Activated naive CD4-positive, alpha-beta T cell treated with anti-CD3 and anti-CD28 coated beads, Interleukin-2, amount 10 ng/mL, durations not matched to agents 7 days and 5 days (primary cell): ENCODE measurements at regions of chr22 and their contacts with region 1.

Region 1: DNA sequence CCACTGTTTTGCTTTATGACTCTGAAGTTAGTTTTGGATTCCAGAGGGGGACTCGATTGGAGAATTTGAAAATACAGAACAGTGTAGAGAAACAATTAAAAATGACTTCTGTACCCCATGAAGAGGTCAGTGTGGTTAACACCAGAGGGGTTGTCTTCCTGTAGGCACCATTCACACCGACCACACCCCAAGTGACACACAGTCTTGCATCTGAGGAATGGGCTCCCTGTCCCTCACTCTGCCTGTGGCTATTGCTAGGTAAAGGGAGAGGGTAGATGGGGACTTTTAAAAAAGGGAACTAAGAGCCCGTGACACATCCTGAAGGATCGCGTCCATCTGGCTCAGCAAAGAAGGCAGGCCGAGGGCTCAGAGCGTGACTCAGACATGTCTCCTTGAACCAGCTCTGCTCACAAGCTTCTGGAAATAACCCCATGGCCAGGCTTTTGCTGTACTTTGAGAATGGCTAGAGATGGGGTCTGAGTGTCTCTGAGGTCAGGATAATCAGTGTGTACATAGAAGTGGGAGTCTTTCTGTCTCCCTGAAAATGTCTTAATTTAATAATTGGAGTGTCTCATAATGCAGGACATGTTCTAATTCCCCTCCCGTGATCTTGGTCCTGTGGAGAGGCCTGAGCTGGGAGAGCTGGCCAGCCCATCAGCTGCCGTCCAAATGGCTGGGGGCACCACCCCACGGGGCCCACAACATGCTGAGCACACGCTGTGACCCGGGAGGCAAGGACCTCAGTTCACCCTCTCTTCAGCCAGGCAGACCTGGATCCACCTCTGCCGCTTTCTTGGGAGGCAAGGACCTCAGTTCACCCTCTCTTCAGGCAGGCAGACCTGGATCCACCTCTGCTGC is 39.3 kb downstream of the SGSM1 start:
- DNase-seq: no peak
- H3K4me3 Mint-ChIP-seq: no peak overlapping the region
- H3K27ac Mint-ChIP-seq: peak overlapping the region; percentile 15
- H3K4me1 Mint-ChIP-seq: peaks cover 4% of the 10 kb centered on the region
- H3K27me3 Mint-ChIP-seq: peaks cover 19% of the 10 kb centered on the region

Region 2: DNA sequence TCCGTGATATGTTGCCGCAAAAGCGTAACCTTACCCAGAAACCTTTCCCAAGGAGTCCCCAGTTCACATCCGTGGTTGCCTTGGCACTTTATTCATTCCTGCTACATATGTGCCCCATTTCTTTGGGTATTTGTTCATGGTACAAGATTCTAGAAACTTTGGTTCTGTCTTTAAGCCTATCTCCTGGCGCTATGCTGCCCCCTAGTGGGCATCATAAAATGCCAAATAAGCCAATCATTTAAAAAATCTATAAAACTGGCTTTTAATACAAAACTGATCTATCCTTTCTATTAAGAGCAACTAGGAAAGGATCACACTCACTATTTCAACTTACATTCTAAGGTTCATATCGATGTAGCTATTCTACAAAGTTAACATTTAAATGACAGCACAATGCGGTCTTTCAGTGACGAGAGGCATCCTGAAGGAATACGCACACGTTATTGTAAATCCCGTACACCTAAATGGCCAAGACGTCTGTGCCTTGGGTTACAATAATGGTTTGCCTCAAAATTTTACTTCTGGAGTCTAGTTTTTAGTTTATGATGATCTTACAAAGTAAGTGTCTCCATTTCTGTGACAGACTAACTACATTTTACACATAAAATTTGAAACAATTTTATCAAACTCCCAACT is 87.0 kb before region 1 on chr22:
- CTCF ChIA-PET with region 1: interaction called, 15 read pairs
- DNase-seq: peak; percentile 71
- H3K4me3 Mint-ChIP-seq: no peak overlapping the region
- H3K27ac Mint-ChIP-seq: no peak overlapping the region
- H3K4me1 Mint-ChIP-seq: no peaks in the 10 kb centered on the region
- H3K27me3 Mint-ChIP-seq: peaks cover 13% of the 10 kb centered on the region

Region 3: DNA sequence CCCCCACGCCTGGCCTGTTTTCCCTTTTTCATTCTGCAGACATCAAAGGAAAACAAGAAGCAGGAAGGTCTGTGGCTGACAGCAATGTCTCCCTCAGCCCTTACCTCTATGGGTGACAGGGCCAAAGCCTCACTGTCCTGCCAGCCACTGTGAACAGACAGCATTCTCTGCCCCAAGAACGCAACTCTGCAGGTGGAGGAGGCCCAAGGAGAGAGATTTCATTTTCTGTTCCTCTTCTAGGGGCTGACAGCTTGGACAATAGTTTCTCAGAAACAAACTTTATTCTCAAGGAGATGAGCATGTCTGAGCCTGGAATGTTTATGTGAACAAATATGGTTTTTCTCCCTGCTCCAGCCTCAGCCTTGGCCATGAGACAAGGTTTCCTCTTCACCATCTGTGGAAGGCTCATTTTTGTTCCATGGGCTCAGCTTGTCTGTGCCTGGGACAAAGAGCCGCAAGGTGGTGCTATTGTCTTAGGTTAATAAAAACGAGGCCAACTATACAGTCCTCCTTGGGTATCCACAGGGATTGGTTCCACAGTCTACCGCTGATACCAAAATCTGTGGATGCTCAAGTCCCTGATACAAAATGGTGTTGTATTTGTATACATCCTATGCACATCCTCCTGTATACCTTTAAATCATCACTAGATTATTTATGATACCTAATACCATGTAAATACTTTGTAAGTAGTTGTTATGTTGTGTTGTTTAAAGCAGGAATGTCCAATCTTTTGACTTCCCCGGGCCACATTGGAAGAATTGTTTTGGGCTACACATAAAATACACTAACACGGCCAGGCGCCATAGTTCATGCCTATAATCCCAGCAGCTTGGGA is 76.5 kb before region 1 on chr22:
- CTCF ChIA-PET with region 1: interaction called, 46 read pairs
- DNase-seq: peak; percentile 63
- H3K4me3 Mint-ChIP-seq: no peak overlapping the region
- H3K27ac Mint-ChIP-seq: no peak overlapping the region
- H3K4me1 Mint-ChIP-seq: peaks cover 3% of the 10 kb centered on the region
- H3K27me3 Mint-ChIP-seq: peaks cover 32% of the 10 kb centered on the region

Region 4: DNA sequence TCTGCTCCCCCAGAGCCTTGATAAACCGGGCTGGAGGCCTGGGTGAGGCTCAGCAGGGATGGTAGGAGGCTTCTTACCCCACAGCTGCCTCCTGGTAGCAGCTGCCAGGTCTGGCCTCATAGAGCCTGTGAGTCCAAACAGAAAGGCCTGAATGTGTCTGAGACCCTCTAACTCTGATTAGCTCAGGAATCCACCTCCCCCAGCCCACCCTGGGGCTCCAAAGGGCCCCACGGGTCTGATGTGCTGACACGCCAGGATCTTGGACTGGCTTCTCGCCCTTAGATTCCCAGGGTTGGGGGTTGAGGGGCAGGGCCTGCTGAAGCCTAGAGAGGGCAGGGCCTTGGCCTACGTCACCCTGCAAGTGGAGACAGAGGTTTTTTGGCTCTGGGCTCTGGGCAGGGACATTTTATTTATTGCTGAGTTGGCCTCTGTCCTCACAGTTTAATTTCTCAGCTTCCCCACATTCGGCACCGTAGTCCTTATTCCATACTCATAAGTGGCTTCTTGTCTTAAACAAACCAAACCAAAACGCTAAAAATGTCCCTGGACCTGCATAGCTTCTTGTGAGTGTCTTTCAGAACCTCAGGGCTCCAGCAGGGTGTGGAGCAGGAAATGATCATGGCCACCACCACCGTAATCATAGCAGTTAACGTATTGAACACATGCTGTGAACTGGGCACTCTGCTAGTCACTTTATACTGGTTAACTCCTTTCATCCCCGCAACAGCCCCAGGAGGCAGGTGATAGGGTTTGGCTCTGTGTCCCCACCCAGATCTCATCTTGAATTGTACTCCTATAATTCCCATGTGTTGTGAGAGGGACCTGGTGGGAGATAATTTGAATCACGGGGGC is 132.3 kb after region 1 on chr22:
- CTCF ChIA-PET with region 1: no interaction called
- DNase-seq: no peak
- H3K4me3 Mint-ChIP-seq: no peak overlapping the region
- H3K27ac Mint-ChIP-seq: no peak overlapping the region
- H3K4me1 Mint-ChIP-seq: no peaks in the 10 kb centered on the region
- H3K27me3 Mint-ChIP-seq: peaks cover 31% of the 10 kb centered on the region